CD4-positive, alpha-beta T cell (primary cell): ENCODE measurements at regions of chrX and their contacts with region 1.

Region 1: DNA sequence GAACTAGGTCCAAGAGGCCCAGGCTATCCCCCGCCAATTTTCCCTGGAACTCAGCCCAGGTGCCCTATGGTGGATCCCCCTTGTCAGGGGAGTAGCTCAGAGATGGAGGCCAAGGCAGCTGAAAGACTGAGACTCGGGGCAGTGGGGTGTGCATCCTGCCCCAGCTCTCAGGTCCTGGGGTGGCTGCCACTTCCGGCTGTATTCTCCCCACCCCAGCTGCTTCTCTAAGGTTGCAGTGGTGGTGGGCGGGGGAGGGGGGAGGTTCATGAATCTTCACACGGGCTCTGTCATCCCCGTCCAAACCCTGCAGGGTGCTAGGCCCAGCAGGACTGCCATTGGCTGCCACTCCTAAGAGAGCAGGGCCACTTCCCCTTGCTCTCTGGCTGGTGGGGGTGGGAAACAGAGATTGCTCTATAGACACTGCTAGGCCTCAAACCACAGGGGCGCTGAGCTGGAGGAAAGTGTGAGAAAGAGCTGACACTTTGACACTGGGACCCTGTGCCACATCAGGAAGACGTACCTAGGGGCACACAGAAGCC is 1.5 kb downstream of the SASH3 start:
- DNase-seq: peak; percentile 54 to 91 (median 73)
- ATAC-seq: peak; percentile 78
- H3K4me3 ChIP-seq: peak overlapping the region; percentile 76
- H3K4me3 Mint-ChIP-seq: peak overlapping the region; percentile 85
- H3K27ac ChIP-seq: peak overlapping the region; percentile 77 to 90
- H3K27ac Mint-ChIP-seq: peak overlapping the region; percentile 99
- H3K4me1 ChIP-seq: peaks cover 77% of the 10 kb centered on the region
- H3K4me1 Mint-ChIP-seq: peaks cover 78% of the 10 kb centered on the region
- H3K27me3 ChIP-seq: no peaks in the 10 kb centered on the region
- H3K27me3 Mint-ChIP-seq: no peaks in the 10 kb centered on the region
- CTCF ChIP-seq: no peak

Region 2: DNA sequence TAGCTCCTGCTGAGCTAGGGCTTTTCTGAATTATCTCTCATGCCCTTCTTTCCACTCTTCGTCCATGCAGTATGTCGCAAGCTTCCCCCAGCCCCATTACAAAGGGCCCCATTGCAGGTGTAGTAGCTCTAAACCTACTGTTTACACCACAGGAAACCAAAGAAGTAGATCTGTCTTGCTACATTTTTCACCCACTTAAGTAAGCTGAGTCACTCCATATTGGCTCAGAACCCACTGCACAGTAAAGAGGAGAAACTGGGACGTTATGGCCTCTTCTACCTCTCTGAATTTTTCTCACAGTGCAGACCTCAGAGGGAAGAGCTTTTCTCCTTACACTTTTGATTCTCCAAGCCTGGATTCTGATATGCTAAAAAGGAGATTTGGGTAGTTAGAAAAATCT is 458.1 kb before region 1 on chrX:
- CTCF ChIA-PET with region 1: no interaction called
- POLR2A ChIA-PET with region 1: no interaction called
- intact Hi-C with region 1: no loop called
- DNase-seq: no peak
- ATAC-seq: no peak
- H3K4me3 ChIP-seq: no peak overlapping the region
- H3K4me3 Mint-ChIP-seq: no peak overlapping the region
- H3K27ac ChIP-seq: no peak overlapping the region
- H3K27ac Mint-ChIP-seq: no peak overlapping the region
- H3K4me1 ChIP-seq: no peaks in the 10 kb centered on the region
- H3K4me1 Mint-ChIP-seq: no peaks in the 10 kb centered on the region
- H3K27me3 ChIP-seq: no peaks in the 10 kb centered on the region
- H3K27me3 Mint-ChIP-seq: no peaks in the 10 kb centered on the region
- CTCF ChIP-seq: no peak

Region 3: GRCh38 chrX:129678614-129679195 is 102.5 kb before region 1 on chrX:
- CTCF ChIA-PET with region 1: interaction called, 3 read pairs
- POLR2A ChIA-PET with region 1: interaction called, 10 read pairs
- intact Hi-C with region 1: loop called (anchors 5 to 10 kb)
- DNase-seq: peak in 10 of 14 experiments; percentile 24 to 71 (median 44)
- ATAC-seq: peak; percentile 84
- H3K4me3 ChIP-seq: peak overlapping the region; percentile 56
- H3K4me3 Mint-ChIP-seq: peak overlapping the region; percentile 84
- H3K27ac ChIP-seq: peak overlapping the region in 1 of 2 donors; percentile 10
- H3K27ac Mint-ChIP-seq: peak overlapping the region; percentile 75
- H3K4me1 ChIP-seq: peaks cover 21% of the 10 kb centered on the region
- H3K4me1 Mint-ChIP-seq: peaks cover 24% of the 10 kb centered on the region
- H3K27me3 ChIP-seq: no peaks in the 10 kb centered on the region
- H3K27me3 Mint-ChIP-seq: no peaks in the 10 kb centered on the region
- CTCF ChIP-seq: no peak

Region 4: DNA sequence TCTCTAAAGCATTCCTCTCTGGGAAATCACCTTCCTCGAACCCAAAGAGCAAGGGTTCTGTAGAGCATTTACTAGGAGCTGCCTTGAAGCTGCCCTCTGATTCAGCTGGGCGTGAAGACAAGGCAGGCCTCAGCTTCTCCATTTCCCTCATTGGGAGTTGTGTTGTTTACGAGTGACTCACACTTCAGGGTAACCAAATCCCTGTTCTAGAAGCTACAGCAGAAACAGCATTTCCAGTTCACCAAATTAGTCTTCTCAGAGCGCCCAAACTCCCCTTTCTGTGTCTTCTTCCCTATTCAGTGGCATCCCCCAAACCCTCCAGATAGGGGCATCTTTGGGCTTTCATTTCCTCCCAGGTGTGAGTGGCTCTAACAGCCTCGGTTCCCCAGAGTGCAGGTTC is 43.3 kb before region 1 on chrX:
- CTCF ChIA-PET with region 1: interaction called, 3 read pairs
- POLR2A ChIA-PET with region 1: interaction called, 4 read pairs
- intact Hi-C with region 1: loop called (anchors 5 to 10 kb)
- DNase-seq: peak in 2 of 14 experiments; percentile 31 to 48
- ATAC-seq: no peak
- H3K4me3 ChIP-seq: no peak overlapping the region
- H3K4me3 Mint-ChIP-seq: no peak overlapping the region
- H3K27ac ChIP-seq: no peak overlapping the region
- H3K27ac Mint-ChIP-seq: no peak overlapping the region
- H3K4me1 ChIP-seq: peaks cover 44% of the 10 kb centered on the region
- H3K4me1 Mint-ChIP-seq: peaks cover 38% of the 10 kb centered on the region
- H3K27me3 ChIP-seq: no peaks in the 10 kb centered on the region
- H3K27me3 Mint-ChIP-seq: no peaks in the 10 kb centered on the region
- CTCF ChIP-seq: no peak

Region 5: GRCh38 chrX:129759576-129760061 is 21.6 kb before region 1 on chrX:
- CTCF ChIA-PET with region 1: interaction called, 10 read pairs
- POLR2A ChIA-PET with region 1: interaction called, 72 read pairs
- intact Hi-C with region 1: loop called (anchors 2 kb)
- DNase-seq: peak in 12 of 14 experiments; percentile 28 to 85 (median 46)
- ATAC-seq: peak; percentile 81
- H3K4me3 ChIP-seq: peak overlapping the region; percentile 5
- H3K4me3 Mint-ChIP-seq: peak overlapping the region; percentile 72
- H3K27ac ChIP-seq: peak overlapping the region; percentile 35 to 40
- H3K27ac Mint-ChIP-seq: peak overlapping the region; percentile 85
- H3K4me1 ChIP-seq: peaks cover 82% of the 10 kb centered on the region
- H3K4me1 Mint-ChIP-seq: peaks cover 73% of the 10 kb centered on the region
- H3K27me3 ChIP-seq: no peaks in the 10 kb centered on the region
- H3K27me3 Mint-ChIP-seq: no peaks in the 10 kb centered on the region
- CTCF ChIP-seq: no peak

Region 6: DNA sequence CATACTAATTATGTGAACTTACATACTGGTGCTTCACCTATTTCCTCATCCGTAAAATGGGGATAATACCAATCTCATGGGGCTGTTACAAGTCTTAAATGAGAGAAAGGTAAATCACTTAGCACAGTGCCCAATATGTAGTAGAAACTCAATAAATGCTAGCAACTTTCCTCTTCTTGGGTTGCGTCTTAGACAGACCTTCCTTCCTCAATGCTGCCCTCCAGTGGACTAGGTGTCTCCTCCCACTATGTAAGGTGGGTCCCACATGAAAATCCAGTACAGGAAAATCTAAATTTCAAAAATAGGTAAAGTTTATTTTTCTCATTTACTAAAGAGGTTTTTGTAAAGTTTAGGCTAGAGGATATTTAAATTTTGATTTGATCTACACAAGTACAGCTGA is 41.9 kb after region 1 on chrX:
- CTCF ChIA-PET with region 1: interaction called, 4 read pairs
- POLR2A ChIA-PET with region 1: interaction called, 5 read pairs
- intact Hi-C with region 1: loop called in 1 of 2 experiments (anchors 5 kb)
- DNase-seq: peak; percentile 16 to 80 (median 43)
- ATAC-seq: peak; percentile 76
- H3K4me3 ChIP-seq: no peak overlapping the region
- H3K4me3 Mint-ChIP-seq: no peak overlapping the region
- H3K27ac ChIP-seq: no peak overlapping the region
- H3K27ac Mint-ChIP-seq: no peak overlapping the region
- H3K4me1 ChIP-seq: peaks cover 5% of the 10 kb centered on the region
- H3K4me1 Mint-ChIP-seq: peaks cover 18% of the 10 kb centered on the region
- H3K27me3 ChIP-seq: no peaks in the 10 kb centered on the region
- H3K27me3 Mint-ChIP-seq: no peaks in the 10 kb centered on the region
- CTCF ChIP-seq: peak; percentile 73

Region 7: DNA sequence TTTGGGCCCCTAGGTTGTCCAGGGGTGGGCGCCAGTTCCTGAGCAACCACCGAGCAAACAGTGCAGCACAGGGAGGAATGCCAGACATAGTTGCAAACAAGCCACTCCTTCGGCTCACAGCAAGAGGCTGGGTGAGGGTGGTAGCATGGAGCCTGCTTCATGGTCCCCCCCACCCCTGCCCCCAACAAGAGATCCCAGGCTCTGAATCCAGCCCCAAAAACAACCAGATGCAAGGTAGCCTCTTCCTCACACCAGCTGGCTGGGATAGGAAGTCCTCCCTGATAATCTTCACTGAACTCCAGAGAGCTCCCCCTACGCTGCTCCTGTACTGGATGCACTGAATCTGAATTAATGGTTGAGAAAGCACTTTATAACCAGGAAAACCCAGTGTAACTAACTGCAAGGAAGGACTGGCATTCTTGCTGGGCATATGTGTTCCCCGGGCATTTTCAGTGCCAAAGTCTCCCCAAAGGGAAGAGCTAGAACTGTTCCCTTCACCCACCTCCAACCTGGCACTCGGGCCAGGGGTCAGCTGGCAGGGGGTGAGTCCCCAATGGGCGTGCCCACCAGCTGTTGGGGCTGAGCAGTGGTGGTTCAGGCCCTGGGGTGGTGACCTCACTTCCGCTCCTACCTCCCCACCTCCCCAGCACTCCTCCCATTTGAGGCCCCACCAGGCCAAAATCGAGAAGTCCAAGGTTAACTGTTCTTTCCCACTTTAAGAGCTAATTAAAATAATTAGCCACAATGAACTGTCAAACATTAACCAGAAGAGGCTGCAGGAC is 327.6 kb after region 1 on chrX:
- CTCF ChIA-PET with region 1: no interaction called
- POLR2A ChIA-PET with region 1: no interaction called
- intact Hi-C with region 1: no loop called
- DNase-seq: peak in 7 of 14 experiments; percentile 13 to 71 (median 48)
- ATAC-seq: peak; percentile 32
- H3K4me3 ChIP-seq: peak overlapping the region; percentile 83
- H3K4me3 Mint-ChIP-seq: peak overlapping the region; percentile 95
- H3K27ac ChIP-seq: peak overlapping the region; percentile 50 to 52
- H3K27ac Mint-ChIP-seq: peak overlapping the region; percentile 82
- H3K4me1 ChIP-seq: peaks cover 52% of the 10 kb centered on the region
- H3K4me1 Mint-ChIP-seq: peaks cover 40% of the 10 kb centered on the region
- H3K27me3 ChIP-seq: no peaks in the 10 kb centered on the region
- H3K27me3 Mint-ChIP-seq: no peaks in the 10 kb centered on the region
- CTCF ChIP-seq: no peak